OCI-LY7 (cell line): ENCODE measurements at regions of chr22 and their contacts with region 1.

Region 1: GRCh38 chr22:40525249-40525884 is 111.2 kb downstream of the MRTFA start:
- DNase-seq: peak; percentile 72
- H3K4me3 ChIP-seq: no peak overlapping the region
- H3K27ac ChIP-seq: no peak overlapping the region
- H3K4me1 ChIP-seq: peaks cover 16% of the 10 kb centered on the region
- CTCF ChIP-seq: peak; percentile 98

Region 2: DNA sequence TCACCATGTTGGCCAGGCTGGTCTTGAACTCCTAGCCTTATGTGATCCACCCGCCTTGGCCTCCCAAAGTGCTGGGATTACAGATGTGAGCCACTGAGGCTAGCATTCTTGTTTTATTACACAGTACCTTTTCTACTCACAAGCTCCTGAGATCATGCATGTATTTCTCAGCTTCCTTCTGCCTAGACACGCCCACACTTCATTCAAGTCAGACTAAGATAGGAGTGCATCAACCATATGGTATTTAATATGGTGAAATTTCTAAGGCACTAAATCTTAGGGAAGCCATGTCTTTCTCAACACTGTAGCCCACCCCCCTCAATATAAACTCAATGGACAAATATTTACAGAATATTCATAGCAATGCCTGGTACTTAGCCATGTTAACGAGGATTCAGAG is 231.7 kb after region 1 on chr22:
- CTCF ChIA-PET with region 1: no interaction called
- POLR2A ChIA-PET with region 1: no interaction called
- intact Hi-C with region 1: loop called (anchors 10 kb)
- DNase-seq: no peak
- H3K4me3 ChIP-seq: no peak overlapping the region
- H3K27ac ChIP-seq: no peak overlapping the region
- H3K4me1 ChIP-seq: peaks cover 6% of the 10 kb centered on the region
- CTCF ChIP-seq: no peak